Right ventricle myocardium superior (tissue), 1 donor: ENCODE measurements at regions of chr19 and their contacts with region 1.

Region 1: DNA sequence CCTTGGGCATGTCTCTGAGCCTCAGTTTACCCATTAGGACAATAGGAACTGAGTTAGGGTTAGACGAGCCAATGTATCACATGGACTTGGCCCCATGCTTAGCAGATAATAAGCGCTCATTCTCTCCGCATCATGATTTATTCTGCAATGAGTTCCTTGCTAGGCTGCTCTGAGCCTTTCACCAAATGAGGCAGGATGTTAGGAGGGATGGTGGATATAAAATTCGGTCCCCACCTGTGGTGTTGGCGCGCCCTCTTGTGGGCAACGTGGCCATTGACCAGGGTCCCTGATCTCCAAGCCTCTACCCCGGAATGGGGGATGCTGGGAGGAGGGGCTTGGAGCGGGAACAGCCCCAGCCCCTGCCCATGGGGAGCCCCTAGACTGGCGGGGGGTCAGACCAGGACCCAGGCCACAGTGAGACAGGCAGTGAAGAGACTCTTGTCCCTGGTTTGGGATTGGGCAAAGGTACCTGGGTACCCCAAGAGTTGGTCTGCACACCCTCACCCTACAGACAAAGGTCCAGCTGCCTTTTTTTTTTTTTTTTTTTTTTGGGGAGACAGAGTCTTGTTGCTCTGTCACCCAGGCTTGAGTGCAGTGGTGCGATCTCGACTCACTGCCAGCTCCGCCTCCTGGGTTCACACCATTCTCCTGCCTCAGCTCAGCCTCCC is 43.9 kb downstream of the CERS4 start:
- DNase-seq: peak; percentile 91
- ATAC-seq: peak; percentile 67

Region 2: DNA sequence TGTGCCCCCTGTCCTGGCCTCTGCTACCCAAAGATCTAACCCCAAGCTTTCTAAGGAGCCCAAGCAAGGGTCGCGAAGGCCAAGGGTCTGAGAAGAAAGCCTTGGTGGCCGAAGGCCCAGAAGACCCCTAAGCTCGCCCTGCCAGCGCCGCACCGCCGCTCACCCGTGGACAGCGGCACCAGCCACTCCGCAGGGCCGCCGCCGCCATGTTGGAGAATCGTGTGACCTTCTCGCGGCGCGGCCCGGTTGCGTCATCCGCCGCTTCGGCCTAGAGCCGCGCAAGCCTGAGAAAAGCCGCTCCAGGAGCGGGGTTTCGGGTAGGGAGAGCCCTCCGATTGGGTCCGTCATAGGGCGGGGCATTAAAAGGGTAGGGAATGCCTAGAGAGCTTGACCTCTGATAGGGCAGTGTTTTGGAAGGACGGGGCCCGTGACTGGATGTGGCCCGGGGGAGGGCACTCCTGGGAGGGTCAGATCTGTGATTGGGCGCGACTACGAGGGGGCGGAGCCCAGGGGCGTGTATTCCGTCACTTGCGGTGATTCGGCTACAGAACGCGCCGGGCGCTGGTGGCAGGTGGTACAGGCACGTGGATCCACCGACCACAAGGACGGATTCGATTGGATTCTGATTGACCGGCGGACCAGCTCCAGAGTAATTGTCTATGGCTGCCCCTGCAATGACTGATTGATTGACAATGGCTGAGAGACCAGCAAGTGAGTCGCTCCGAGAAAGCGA is 309.4 kb before region 1 on chr19 and contains the start of gene TIMM44:
- intact Hi-C with region 1: loop called (anchors 5 kb)
- DNase-seq: peak; percentile 99
- ATAC-seq: peak; percentile 98
- total RNA-seq, gene TIMM44: 116 TPM

Region 3: GRCh38 chr19:8116437-8117293 is 136.4 kb before region 1 on chr19:
- intact Hi-C with region 1: no loop called
- DNase-seq: no peak
- ATAC-seq: no peak

Region 4: DNA sequence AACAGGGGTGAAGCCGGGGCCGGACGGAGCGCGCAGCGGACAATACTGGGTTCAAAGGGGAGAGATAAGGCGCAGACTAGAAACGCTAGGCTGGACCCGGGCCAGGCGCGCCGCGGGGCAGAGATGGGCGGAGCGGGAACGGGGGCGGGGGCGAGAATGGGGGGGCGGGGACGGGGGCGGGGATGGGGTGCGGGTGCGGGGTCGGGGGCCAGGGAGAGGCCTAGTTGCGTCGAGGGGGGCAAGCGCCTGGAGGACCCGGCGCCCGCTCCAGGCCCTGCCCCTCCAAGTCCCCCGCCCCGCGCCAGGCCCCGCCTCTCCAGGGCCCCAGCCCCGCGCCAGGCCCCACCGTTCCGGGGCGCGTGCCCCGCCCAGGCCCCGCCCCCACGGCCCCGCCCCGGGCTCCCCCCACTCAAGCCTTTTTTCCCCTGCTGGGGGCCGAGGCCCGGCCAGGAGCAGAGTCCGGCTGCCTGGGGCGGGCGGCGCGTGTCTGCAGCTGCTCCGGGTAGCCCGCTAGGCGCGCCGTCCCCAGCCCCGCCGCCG is 44.1 kb before region 1 on chr19 and contains the start of gene CERS4:
- intact Hi-C with region 1: loop called (anchors 5 kb)
- DNase-seq: peak; percentile 87
- ATAC-seq: peak; percentile 96
- total RNA-seq, gene CERS4: 19.1 TPM

Region 5: DNA sequence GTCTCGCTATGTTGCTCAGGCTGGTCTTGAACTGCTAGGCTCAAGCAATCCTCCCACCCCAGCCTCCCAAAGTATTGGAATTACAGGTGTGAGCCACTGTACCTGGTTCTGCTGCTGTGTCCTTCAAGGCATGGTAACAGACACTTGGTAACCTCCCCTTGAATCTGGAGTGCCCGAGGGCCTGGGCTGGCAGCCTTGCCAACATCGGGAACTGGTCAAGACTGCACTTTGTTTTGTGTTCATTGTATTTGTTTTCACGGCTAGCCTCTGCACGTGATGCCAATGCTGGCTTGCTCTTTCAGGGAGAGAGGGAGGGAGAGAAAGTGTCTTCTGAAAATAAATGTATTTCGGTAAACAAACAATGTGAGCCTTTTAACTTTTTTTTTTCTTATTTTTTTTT is 31.9 kb before region 1 on chr19:
- intact Hi-C with region 1: no loop called
- DNase-seq: no peak
- ATAC-seq: no peak